BJ (cell line): ENCODE measurements at regions of chr1 and their contacts with region 1.

Region 1: DNA sequence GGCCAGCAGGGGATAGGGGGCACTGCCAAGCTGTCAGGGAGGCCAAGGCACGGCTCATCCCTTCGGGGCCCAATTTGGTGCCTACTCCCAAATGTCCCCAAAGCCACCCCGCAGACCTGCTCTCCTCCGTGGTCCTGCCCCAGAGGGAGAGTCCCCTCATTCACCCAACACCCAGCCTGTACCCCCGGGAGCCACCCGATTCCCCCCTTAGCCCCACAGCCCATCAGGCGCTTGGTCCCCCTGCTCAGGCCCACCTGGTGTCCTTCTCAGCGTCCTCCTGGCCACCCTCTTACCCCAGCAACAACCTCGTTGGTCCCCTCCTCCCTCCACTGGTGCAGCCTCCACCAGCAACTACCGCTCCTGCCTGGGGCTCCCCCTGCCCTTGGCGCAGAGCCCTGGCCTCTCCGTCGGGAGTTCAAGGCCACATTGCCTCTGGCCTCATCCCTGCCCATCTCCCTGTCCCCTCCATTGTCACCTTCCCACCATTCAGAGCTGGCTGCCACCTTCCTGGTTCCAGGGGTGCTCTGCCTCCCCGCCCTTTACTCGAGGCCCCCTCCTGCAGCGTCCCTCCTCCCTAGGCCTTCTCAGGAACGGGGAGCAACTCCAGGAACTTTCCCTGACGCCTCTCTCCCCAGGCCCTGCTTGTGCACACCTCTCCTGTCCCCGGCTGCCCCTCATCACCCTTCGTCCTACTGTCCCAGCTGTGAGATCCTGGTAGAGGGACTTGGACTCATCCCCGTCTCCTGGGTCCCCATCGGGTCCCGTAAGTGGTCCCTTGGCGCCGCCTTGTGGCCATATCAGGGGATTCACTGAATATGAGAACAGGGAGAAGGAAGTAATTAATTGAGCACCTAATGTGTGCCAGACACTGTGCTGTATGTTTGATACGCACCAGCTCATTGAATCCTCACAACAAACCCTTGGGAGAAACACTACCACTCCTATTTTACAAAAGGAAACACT is 73.9 kb downstream of the RAP1GAP start:
- DNase-seq: no peak
- H3K4me3 ChIP-seq: no peak overlapping the region
- H3K27me3 ChIP-seq: peaks cover 6% of the 10 kb centered on the region
- CTCF ChIP-seq: peak; percentile 81

Region 2: DNA sequence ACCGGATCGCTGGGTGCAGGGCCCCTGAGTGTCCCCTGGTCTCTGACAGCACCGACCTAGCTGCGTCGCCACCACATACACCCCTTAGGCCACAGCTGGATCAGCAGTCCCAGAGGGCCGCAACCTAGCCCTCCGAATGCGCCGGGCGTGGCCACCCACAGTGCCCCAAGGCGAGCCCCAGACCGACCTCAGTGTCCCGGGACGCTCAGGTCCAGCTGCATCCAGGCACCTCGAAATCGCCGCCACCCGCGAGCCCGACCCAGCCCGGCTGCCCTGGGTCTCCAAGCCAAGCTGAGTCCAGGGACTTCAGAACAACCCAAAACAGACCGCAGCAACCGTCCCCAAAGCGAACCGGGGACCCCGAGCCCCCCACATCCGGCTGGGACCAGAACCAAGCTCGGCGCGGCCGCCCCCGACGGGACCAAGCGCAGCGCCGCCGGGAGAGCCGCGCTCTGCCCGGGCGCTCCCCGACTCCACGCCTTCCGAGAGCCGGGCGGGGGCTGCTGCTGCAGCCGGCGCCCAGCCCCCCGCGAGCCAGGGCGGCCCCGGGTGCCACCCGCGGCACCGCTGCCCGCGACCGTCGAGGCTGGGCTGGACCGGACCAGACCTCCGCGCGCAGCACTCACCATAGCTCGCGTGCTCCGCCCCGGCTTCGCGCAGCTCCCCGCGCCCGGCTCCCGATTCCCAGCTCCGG is 250.3 kb before region 1 on chr1:
- CTCF ChIA-PET with region 1: no interaction called
- POLR2A ChIA-PET with region 1: no interaction called
- DNase-seq: no peak
- H3K4me3 ChIP-seq: peak overlapping the region; percentile 85
- H3K27me3 ChIP-seq: no peaks in the 10 kb centered on the region
- CTCF ChIP-seq: no peak

Region 3: DNA sequence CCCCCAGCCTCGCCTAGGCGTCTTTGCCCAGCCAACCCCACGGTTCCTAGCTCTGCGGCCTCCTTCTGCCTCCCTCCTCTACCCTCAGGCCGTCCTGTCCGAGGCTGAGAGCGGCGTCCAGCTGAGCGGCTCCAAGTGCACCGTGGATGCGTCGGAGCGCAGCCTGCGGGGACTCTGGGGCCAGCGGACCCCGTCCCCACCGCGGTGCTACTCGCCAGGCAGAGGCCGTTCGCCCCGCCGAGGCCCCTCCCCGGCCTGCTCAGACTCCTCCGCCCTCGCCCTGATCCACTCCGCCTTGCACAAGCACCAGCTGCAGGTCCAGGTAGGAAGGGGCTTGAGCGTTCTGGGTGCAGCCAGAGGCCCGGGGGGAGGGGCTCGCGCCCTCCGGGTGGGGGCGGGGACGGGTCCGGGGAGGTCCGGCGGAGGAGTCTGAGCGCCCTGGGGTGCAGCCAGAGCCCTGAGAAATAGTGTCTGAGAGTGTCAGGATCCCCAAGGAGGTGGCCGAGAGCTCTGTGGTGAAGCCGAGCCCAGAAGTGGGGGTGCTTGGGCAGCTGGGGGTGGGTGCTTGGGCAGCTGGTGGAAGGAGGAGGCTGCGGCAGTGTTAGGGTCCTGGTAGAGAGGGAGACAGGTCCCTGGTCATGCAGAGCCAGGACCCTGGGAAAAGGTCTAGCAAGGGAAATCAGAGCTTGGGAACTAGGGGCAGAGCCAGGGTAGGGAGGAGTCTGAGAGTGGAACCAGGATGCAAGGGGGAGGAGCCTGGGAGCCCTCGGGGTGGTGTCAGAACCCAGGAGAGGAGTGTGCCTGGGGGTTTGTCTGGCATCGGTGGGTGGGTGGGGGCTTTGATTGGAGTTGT is 158.5 kb before region 1 on chr1:
- CTCF ChIA-PET with region 1: no interaction called
- POLR2A ChIA-PET with region 1: no interaction called
- DNase-seq: no peak
- H3K4me3 ChIP-seq: peak overlapping the region; percentile 26
- H3K27me3 ChIP-seq: no peaks in the 10 kb centered on the region
- CTCF ChIP-seq: no peak

Region 4: DNA sequence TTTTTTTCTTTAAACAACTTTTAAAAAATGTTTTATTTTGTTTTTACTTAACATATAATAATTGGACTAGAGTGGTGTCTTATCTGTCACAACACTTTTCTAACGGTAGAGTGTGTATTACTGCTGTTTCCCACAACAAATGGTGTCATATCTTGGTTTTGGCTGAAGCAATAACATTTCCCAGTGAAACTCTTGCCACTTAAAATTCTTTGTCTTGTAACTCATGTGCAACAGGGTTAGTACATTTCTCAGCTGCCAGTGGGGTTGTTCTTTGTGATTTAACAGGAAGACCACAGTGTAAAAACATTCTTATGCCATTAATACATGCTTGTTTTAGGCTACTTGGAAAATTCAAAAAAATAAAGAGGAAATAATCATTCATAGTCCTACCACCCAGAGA is 42.5 kb before region 1 on chr1:
- CTCF ChIA-PET with region 1: no interaction called
- POLR2A ChIA-PET with region 1: no interaction called
- DNase-seq: peak; percentile 77
- H3K4me3 ChIP-seq: no peak overlapping the region
- H3K27me3 ChIP-seq: peaks cover 8% of the 10 kb centered on the region
- CTCF ChIP-seq: no peak

Region 5: GRCh38 chr1:21607549-21608529 is 12.6 kb after region 1 on chr1:
- CTCF ChIA-PET with region 1: interaction called, 14 read pairs
- POLR2A ChIA-PET with region 1: no interaction called
- DNase-seq: peak; percentile 8
- H3K4me3 ChIP-seq: no peak overlapping the region
- H3K27me3 ChIP-seq: peaks cover 7% of the 10 kb centered on the region
- CTCF ChIP-seq: no peak